B cell (primary cell): ENCODE measurements at regions of chr9 and their contacts with region 1.

Region 1: DNA sequence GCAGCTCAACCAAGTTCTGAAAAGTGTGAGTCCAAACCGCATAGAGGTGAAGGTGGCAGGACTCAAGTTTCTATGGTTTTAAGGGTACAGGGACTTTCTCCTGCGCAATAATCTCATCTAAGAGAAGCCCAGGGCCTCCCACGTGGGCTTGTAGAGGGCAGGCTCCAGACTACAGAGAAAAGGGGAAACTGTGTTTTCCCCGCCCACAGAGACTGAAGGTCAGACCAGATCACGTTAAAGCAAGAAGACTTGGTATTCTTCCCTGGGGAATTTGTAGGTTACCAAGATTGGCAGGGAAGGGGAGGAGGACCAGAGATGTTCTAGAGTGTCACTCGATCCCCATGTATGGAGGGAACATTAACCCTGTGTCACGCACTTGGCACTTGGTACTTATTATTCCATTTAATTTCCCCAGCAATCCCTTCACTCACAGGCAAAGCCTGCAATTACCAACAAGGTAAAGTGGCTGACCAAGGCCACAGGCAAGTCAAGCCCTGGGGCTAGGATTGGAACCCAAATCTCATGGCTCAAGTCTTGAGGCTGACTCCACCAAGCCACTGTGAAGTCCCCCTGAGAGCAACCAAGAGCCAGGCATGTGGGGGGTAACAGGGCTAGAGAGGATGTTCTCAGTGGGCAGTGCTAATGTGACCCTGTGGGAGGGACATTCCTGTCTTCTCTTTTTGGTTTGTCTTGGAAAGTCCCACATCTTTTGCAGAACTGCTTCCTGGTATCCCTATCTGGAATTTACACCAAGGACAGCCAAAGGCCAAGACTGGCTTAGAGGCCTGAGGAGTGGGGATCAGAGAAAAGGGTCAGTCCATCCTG is 18.3 kb upstream of the NEK6 start:
- DNase-seq: peak; percentile 82
- ATAC-seq: peak; percentile 98
- H3K4me3 ChIP-seq: peak overlapping the region in 1 of 5 experiments; percentile 22
- H3K4me3 Mint-ChIP-seq: peak overlapping the region; percentile 38
- H3K27ac ChIP-seq: peak overlapping the region in 1 of 2 donors; percentile 40
- H3K27ac Mint-ChIP-seq: peak overlapping the region; percentile 85
- H3K4me1 ChIP-seq: peaks cover 25 to 37% of the 10 kb centered on the region in 2 donors
- H3K4me1 Mint-ChIP-seq: peaks cover 47% of the 10 kb centered on the region
- H3K27me3 ChIP-seq: no peaks in the 10 kb centered on the region
- H3K27me3 Mint-ChIP-seq: no peaks in the 10 kb centered on the region
- CTCF ChIP-seq: no peak

Region 2: GRCh38 chr9:123453831-123454321 is 785.6 kb before region 1 on chr9:
- CTCF ChIA-PET with region 1: no interaction called
- POLR2A ChIA-PET with region 1: no interaction called
- intact Hi-C with region 1: no loop called
- DNase-seq: no peak
- ATAC-seq: no peak
- H3K4me3 ChIP-seq: no peak overlapping the region
- H3K4me3 Mint-ChIP-seq: no peak overlapping the region
- H3K27ac ChIP-seq: no peak overlapping the region
- H3K27ac Mint-ChIP-seq: no peak overlapping the region
- H3K4me1 ChIP-seq: no peaks in the 10 kb centered on the region
- H3K4me1 Mint-ChIP-seq: no peaks in the 10 kb centered on the region
- H3K27me3 ChIP-seq: no peaks in the 10 kb centered on the region
- H3K27me3 Mint-ChIP-seq: no peaks in the 10 kb centered on the region
- CTCF ChIP-seq: no peak

Region 3: DNA sequence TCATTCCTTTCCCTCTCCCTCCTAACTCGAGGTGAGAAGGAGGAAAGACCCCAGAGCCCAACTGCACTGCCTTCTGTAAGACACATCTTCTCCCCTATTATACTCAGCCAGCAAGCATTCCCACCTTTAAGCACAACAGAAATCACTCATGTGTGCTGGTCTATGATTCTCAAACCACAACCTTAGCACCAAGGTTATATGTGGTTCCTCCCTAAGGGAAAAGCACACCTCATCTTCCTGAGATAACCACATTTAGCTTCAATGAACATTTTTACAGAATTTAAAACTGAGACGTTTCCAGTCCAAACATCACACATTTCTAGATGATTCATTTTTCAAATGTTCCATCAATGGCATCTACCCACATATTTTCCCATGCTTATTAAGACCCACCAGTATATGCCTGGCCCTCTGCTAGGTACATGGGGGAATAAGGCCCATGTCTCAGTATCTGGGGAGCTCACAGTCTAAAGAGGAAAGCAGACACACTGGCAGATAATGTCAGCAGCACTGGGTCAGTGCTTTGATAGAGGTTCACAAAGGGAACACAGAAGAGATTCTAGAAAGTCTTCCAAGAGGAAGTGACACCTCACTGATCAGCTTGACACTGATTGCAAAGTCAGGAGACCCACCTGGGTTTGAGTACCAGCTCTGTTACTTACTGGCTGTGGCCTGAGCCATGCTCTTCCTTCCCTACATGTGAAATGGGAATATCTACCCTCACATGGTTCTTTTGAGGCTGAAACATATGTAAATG is 554.9 kb before region 1 on chr9:
- CTCF ChIA-PET with region 1: no interaction called
- POLR2A ChIA-PET with region 1: interaction called, 10 read pairs
- intact Hi-C with region 1: no loop called
- DNase-seq: peak; percentile 43
- ATAC-seq: peak; percentile 56
- H3K4me3 ChIP-seq: no peak overlapping the region
- H3K4me3 Mint-ChIP-seq: no peak overlapping the region
- H3K27ac ChIP-seq: peak overlapping the region in 1 of 2 donors; percentile 44
- H3K27ac Mint-ChIP-seq: peak overlapping the region; percentile 72
- H3K4me1 ChIP-seq: peaks cover 28 to 33% of the 10 kb centered on the region in 2 donors
- H3K4me1 Mint-ChIP-seq: peaks cover 46% of the 10 kb centered on the region
- H3K27me3 ChIP-seq: no peaks in the 10 kb centered on the region
- H3K27me3 Mint-ChIP-seq: no peaks in the 10 kb centered on the region
- CTCF ChIP-seq: no peak

Region 4: DNA sequence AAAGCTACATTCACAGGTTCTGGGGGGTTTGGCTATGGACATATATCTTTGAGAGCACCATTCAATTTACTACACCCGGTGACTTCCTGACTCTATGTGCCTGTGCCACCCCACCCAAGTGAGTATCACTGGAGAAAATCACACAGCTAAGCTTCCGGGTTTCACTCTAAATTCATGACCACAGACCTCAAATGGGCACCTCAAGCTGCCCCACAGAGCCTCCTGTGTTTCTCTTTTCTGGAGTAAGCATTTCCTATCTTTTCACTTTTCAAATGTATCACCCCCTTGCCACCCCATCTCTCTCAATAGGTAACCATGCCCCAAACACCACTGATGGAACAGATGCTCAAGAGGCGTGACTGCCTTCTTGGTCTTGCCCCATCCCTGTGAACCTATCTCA is 30.9 kb before region 1 on chr9:
- CTCF ChIA-PET with region 1: no interaction called
- POLR2A ChIA-PET with region 1: no interaction called
- intact Hi-C with region 1: no loop called
- DNase-seq: peak; percentile 42
- ATAC-seq: peak; percentile 23
- H3K4me3 ChIP-seq: no peak overlapping the region
- H3K4me3 Mint-ChIP-seq: peak overlapping the region; percentile 51
- H3K27ac ChIP-seq: peak overlapping the region; percentile 32 to 48
- H3K27ac Mint-ChIP-seq: peak overlapping the region; percentile 83
- H3K4me1 ChIP-seq: peaks cover 75 to 86% of the 10 kb centered on the region in 2 donors
- H3K4me1 Mint-ChIP-seq: peaks cover 91% of the 10 kb centered on the region
- H3K27me3 ChIP-seq: no peaks in the 10 kb centered on the region
- H3K27me3 Mint-ChIP-seq: no peaks in the 10 kb centered on the region
- CTCF ChIP-seq: no peak

Region 5: DNA sequence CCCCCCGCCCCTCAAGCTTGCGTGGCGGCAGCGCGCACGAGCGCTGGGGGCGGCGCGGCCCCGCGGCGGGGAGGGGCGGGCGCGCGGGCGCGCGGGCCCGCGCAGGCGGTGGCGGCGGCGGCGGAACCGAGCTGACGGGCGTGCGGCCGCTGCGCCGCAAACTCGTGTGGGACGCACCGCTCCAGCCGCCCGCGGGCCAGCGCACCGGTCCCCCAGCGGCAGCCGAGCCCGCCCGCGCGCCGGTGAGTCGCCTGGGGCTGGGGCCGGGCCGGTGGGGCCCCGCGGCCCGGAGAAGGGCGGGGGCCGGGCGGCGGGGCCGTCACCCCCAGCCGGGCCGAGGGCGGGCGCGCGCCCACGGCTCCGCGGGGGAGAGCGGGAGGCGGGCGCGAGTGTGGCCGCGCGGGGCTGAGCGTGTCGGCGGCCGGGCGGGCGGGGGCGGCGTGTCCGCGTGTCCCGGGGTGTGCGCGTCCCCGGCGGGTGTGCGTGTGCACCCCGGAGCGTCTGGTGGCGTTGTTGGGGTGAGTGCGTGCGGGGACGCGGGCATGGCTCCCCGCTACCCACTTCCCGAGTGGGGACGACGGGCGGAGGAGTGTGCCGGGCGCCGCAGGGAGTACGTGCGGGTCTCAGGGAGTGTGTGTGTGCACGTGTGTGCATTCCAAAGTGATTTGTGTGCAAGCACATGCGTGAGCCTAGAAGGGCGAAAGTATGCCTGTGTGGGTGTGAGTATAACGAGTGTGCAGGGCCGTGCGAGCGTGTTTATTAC is 18.6 kb after region 1 on chr9 and contains the start of gene NEK6:
- CTCF ChIA-PET with region 1: interaction called, 3 read pairs
- POLR2A ChIA-PET with region 1: interaction called, 8 read pairs
- intact Hi-C with region 1: loop called (anchors 2 kb)
- DNase-seq: peak; percentile 75
- ATAC-seq: peak; percentile 60
- H3K4me3 ChIP-seq: peak within 1 kb of the TSS; percentile 65 to 97 (median 81)
- H3K4me3 Mint-ChIP-seq: peak within 1 kb of the TSS; percentile 100
- H3K27ac ChIP-seq: peak within 1 kb of the TSS; percentile 49 to 71
- H3K27ac Mint-ChIP-seq: peak within 1 kb of the TSS; percentile 98
- H3K4me1 ChIP-seq: peaks cover 42 to 67% of the 10 kb centered on the region in 2 donors
- H3K4me1 Mint-ChIP-seq: peaks cover 71% of the 10 kb centered on the region
- H3K27me3 ChIP-seq: no peaks in the 10 kb centered on the region
- H3K27me3 Mint-ChIP-seq: no peaks in the 10 kb centered on the region
- CTCF ChIP-seq: no peak
- total RNA-seq, gene NEK6: 63.1 and 66.3 TPM in 2 replicates